AG04450 (cell line): ENCODE measurements at regions of chr9 and their contacts with region 1.

Region 1: DNA sequence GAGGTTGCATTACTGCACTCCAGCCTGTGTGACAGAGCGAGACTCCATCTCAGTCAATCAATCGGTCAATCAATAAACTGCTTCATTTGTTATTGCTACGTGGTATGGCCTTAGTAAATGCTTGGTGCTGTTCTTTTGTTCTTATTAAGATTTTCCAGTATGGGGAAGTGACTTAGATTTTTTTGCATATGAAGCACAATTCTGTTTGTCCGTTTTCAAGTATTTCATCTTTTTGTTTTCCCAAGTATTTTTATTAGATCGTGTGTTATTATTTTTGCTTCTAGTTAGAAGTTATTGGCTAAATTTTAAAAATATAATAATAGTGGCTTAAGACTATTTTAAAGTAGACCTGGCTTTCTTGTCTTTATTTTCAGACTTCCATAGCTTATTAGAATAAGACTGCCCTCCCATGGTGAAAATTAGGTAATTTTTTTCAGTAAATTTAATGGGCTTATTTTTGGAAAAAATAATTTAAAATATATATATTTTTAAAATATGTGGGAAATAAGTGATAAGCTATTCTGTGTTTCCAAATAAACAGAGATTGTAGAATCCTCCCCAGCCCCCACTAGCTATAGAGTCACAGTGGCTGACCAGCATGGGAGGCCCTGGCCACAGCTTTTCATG is 14.7 kb upstream of the OMD start:
- DNase-seq: no peak
- H3K4me3 ChIP-seq: no peak overlapping the region
- H3K27ac ChIP-seq: no peak overlapping the region
- H3K27me3 ChIP-seq: no peaks in the 10 kb centered on the region
- CTCF ChIP-seq: peak; percentile 50

Region 2: DNA sequence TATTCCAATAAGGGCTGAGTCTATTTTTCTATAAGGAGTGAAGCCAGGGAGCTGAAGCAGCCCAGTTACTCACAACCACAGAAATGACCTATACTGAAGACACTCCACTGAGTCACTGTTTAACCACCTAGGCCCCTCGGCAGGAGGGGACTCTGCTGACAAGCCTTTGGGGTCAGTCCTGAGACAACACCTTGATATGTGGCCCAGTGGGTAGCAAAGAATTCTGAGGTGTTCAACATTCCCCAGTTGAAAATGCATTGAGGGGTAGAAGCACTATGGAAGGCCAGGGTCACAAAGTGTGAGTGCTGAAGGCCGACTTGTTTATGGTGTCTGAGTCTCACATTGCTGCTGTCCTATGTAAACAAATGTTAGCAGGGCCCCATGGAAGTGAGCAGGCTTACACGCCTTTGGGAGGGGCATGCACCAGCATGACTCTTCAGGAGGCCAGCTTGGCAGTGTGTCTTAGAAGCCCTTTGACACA is 902.8 kb before region 1 on chr9:
- CTCF ChIA-PET with region 1: no interaction called
- POLR2A ChIA-PET with region 1: no interaction called
- DNase-seq: peak; percentile 26
- H3K4me3 ChIP-seq: no peak overlapping the region
- H3K27ac ChIP-seq: peak overlapping the region; percentile 85
- H3K27me3 ChIP-seq: no peaks in the 10 kb centered on the region
- CTCF ChIP-seq: no peak

Region 3: GRCh38 chr9:92342825-92343488 is 96.1 kb before region 1 on chr9:
- CTCF ChIA-PET with region 1: interaction called, 17 read pairs
- POLR2A ChIA-PET with region 1: no interaction called
- DNase-seq: no peak
- H3K4me3 ChIP-seq: no peak overlapping the region
- H3K27ac ChIP-seq: no peak overlapping the region
- H3K27me3 ChIP-seq: no peaks in the 10 kb centered on the region
- CTCF ChIP-seq: 0 out of 2 replicates have a peak, but pooled peaks have one; percentile 30

Region 4: DNA sequence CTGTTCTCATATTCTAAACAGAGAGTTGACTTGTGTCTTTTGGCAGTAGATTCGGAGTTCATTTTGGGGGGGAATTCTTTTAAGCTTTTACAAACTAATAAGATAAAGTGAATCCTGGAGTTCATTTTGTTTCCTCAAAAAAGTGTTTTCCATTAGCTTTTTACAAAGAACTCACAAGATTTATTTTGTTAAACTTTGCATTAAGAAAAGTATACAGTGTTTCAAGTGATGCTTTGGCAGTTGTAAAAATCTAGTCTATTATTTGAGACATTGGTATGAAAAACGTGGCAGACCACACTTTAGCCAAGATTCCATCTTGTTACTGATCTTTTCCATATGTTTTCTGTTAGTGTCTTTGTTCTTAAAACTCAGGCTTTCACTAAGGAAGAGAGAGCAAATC is 13.5 kb before region 1 on chr9:
- CTCF ChIA-PET with region 1: interaction called, 10 read pairs
- POLR2A ChIA-PET with region 1: no interaction called
- DNase-seq: no peak
- H3K4me3 ChIP-seq: no peak overlapping the region
- H3K27ac ChIP-seq: no peak overlapping the region
- H3K27me3 ChIP-seq: no peaks in the 10 kb centered on the region
- CTCF ChIP-seq: no peak